ENCODE measurements at regions of chr18 and their contacts with region 1.

Region 1: GRCh38 chr18:13316063-13316462 is 97.5 kb downstream of the LDLRAD4 start:
- DNase-seq: no peak
- H3K4me3 ChIP-seq: no peak overlapping the region
- H3K27ac ChIP-seq: no peak overlapping the region
- H3K4me1 ChIP-seq: peaks cover 0 to 17% of the 10 kb centered on the region in 2 donors
- H3K27me3 ChIP-seq: no peaks in the 10 kb centered on the region
- CTCF ChIP-seq: no peak
- POLR2A ChIP-seq: no peak

Region 2: GRCh38 chr18:13302457-13303225 is 13.4 kb before region 1 on chr18:
- intact Hi-C with region 1: loop called in 1 of 2 experiments (anchors 2 kb)
- DNase-seq: peak in 1 of 7 donors; percentile 23
- H3K4me3 ChIP-seq: no peak overlapping the region
- H3K27ac ChIP-seq: no peak overlapping the region
- H3K4me1 ChIP-seq: peaks cover 0 to 22% of the 10 kb centered on the region in 2 donors
- H3K27me3 ChIP-seq: no peaks in the 10 kb centered on the region
- CTCF ChIP-seq: no peak
- POLR2A ChIP-seq: no peak

Region 3: DNA sequence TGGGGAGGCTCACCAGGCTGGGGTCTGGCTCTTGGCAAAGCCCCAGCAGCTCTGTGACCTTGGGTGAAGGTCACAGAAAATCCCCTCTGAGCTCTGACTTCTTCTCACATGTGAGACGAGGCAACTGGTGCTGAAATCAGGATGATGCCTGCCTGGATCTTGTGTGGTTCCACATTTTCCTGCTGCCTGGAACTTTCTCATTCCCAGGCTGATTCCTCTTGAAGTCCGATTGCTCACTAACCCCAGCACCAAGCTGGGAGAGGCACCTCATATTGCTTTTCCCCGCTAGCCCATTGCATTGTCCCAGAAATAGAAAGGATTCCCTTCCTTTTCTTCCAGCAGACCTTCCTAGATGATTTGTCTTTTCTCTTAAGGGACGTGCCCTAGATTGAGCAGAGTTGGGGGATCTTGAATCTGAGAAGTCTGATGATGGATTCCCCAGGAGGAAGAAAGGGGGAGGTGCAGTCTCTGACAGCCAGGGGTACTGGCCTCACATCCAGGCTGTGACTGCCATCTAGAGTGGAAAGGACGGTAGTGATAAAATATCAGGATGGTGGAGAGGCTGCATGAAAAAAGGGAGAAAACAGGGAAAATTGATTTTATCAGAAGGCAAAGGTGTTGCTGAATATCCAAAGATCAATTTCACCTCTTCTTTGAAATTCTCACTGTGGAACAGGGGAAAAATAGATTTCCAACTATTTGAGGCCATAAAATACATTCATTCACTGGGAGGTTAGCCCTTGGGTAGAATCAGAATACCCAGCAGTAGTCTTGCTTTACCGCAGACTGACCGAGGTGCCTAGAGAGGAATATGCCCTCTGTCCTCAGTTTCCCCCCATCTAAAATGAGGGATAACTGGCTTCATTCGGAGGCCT is 314.0 kb after region 1 on chr18:
- intact Hi-C with region 1: no loop called
- DNase-seq: peak; percentile 44 to 78 (median 57)
- H3K4me3 ChIP-seq: no peak overlapping the region
- H3K27ac ChIP-seq: peak overlapping the region in 2 of 5 donors; percentile 9 to 22
- H3K4me1 ChIP-seq: peaks cover 5 to 9% of the 10 kb centered on the region in 2 donors
- H3K27me3 ChIP-seq: no peaks in the 10 kb centered on the region
- CTCF ChIP-seq: peak; percentile 59 to 92 (median 83)
- POLR2A ChIP-seq: no peak